ENCODE measurements at regions of chr5 and their contacts with region 1.

Region 1: DNA sequence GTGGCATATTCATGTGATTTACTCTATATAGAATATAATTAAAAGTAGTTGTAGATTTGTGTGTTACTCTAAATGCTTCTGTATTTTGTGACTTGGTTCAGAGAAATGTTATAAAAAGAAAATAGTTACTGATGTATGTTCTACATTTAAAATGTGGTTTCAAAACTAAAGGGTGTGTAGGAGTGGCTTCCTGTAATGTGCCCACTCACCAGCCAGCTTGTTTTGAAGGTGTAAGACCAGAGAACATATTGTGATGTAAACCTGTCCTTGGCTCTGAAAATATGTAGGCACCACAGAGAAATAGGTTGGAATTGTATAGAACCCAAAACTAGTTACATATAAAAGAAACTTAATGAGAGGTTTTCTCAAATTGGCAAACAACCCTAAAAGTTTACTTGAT is 51.2 kb upstream of the ARRDC3 start:
- DNase-seq: no peak
- H3K4me3 ChIP-seq: no peak overlapping the region
- H3K27ac ChIP-seq: no peak overlapping the region
- H3K4me1 ChIP-seq: no peaks in the 10 kb centered on the region
- H3K27me3 ChIP-seq: no peaks in the 10 kb centered on the region
- CTCF ChIP-seq: no peak
- POLR2A ChIP-seq: no peak

Region 2: DNA sequence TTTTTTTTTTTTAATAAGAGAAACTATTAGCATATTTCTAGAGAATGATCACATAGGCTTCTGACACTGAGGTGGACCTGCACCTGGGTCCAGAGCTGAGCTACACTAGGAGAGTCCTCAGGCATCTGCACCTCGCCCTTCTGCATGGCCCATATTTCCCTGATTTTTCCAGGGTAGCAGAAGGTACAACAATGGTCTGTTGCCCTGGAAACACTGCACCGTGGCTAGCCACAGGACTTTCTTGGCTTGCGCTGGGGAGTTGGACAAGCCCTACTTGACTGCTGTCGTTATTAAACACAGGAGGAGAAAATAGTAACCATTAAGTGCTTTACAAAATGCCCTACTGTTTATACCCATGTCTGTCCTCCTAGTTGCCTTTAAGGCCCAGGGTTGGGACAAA is 1935.6 kb before region 1 on chr5:
- CTCF ChIA-PET with region 1: no interaction called
- POLR2A ChIA-PET with region 1: no interaction called
- dilution Hi-C with region 1: no loop called
- intact Hi-C with region 1: loop called (anchors 5 kb)
- DNase-seq: no peak
- H3K4me3 ChIP-seq: no peak overlapping the region
- H3K27ac ChIP-seq: no peak overlapping the region
- H3K4me1 ChIP-seq: no peaks in the 10 kb centered on the region
- H3K27me3 ChIP-seq: no peaks in the 10 kb centered on the region
- CTCF ChIP-seq: no peak
- POLR2A ChIP-seq: no peak

Region 3: GRCh38 chr5:91132550-91132949 is 301.8 kb before region 1 on chr5:
- CTCF ChIA-PET with region 1: no interaction called
- POLR2A ChIA-PET with region 1: no interaction called
- dilution Hi-C with region 1: no loop called
- intact Hi-C with region 1: no loop called
- DNase-seq: peak; percentile 66
- H3K4me3 ChIP-seq: no peak overlapping the region
- H3K27ac ChIP-seq: no peak overlapping the region
- H3K4me1 ChIP-seq: peaks cover 3% of the 10 kb centered on the region
- H3K27me3 ChIP-seq: no peaks in the 10 kb centered on the region
- CTCF ChIP-seq: no peak
- POLR2A ChIP-seq: no peak

Region 4: GRCh38 chr5:91403438-91403837 is 30.9 kb before region 1 on chr5:
- CTCF ChIA-PET with region 1: no interaction called
- POLR2A ChIA-PET with region 1: no interaction called
- dilution Hi-C with region 1: no loop called
- intact Hi-C with region 1: no loop called
- DNase-seq: no peak
- H3K4me3 ChIP-seq: no peak overlapping the region
- H3K27ac ChIP-seq: no peak overlapping the region
- H3K4me1 ChIP-seq: no peaks in the 10 kb centered on the region
- H3K27me3 ChIP-seq: no peaks in the 10 kb centered on the region
- CTCF ChIP-seq: no peak
- POLR2A ChIP-seq: no peak

Region 5: DNA sequence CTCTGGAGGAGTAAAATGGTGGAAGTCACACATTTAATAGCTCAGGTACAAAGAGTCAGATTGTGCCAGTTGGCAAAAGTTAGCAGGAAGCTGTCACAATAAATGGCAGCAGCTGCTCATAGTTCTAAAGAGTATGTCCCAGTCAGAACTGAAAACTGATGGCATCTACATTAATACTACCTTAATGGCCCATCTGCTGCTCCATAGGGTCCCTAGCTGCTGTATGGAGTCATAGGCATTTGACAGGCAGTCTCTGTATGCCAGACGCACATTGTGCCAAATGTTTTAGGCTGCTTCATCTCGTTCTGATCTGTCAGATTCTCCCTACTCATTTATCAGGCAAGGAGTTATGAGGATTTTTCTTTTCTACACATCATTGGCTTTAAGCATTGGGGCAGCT is 464.6 kb after region 1 on chr5:
- CTCF ChIA-PET with region 1: no interaction called
- POLR2A ChIA-PET with region 1: no interaction called
- dilution Hi-C with region 1: no loop called
- intact Hi-C with region 1: no loop called
- DNase-seq: no peak
- H3K4me3 ChIP-seq: no peak overlapping the region
- H3K27ac ChIP-seq: no peak overlapping the region
- H3K4me1 ChIP-seq: no peaks in the 10 kb centered on the region
- H3K27me3 ChIP-seq: no peaks in the 10 kb centered on the region
- CTCF ChIP-seq: no peak
- POLR2A ChIP-seq: no peak